IMR-90 (cell line): ENCODE measurements at regions of chr1 and their contacts with region 1.

Region 1: DNA sequence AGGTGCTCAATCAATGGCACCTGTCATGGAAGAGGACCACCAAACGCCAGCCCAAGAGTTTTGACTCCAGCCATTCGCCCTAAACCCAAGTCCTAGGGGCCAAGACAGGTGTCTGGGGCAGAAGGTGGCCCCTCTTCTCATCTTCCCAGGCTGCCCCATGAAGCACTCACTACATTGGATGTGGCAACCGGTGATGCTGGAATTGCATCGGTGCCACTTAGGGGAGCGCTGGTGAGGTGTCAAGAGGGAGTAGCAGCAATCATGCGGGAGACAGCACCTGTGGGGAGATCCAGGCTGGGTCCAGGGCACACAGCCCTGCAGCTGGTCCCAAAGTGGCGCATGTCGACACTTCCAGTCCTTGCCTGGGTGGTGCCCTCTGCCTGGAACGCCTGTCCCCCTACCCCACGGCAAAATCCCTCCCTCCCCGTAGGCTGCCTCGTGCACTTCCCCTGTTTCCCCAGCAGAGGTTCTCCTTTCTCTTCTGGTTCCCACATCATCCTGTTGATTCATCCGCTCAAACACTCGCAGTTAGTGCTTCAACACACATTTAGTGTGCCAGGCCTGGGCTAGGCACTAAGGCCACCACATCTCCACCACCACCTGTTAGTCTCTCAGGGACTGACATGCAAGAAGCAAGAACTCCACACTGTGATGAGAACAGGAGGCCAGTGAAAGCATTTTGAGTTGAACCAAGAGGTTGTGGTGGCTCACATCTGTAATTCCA is 18.5 kb downstream of the PLA2G2D start:
- DNase-seq: peak; percentile 48
- ATAC-seq: peak; percentile 95
- H3K4me3 ChIP-seq: no peak overlapping the region
- H3K27ac ChIP-seq: no peak overlapping the region
- H3K4me1 ChIP-seq: peaks cover 3% of the 10 kb centered on the region
- H3K27me3 ChIP-seq: peaks cover 22% of the 10 kb centered on the region
- CTCF ChIP-seq: peak; percentile 54
- POLR2A ChIP-seq: no peak
- RAD21 ChIP-seq: peak; percentile 59

Region 2: DNA sequence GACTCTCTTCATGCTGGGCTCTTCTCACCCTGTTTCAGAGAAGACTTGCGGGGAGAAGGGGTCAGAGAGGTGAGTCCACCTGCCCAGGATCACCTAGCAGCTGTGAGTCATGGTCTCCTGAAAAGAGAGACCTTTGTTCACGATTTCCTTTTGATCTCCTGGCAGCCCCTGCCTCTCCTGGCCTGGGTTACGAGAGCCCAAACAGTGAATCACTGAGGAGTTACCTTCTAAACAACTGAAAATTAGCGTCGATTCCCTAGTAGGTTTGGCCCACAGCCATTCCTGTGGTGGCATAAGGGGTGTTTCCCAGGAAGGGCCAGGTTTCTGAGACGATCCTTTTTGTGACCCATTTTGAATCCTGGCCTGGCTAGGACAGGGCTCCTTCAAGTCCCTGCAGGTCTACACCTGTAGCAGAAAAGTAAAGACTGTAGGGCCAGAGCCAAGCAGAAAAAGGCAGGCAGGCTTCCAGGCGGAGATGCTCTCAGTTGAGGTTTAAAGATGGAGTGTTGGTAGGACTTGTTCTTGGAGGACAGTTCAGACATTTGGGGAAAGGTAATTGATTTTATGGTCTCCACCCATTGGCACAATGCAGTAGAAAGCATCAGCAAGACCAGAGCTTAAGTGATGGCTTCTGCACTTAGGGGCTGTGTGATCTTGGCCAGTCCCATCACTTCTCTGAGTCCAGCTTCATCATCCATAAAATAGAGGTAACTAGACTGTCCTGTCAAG is 175.3 kb before region 1 on chr1:
- CTCF ChIA-PET with region 1: no interaction called
- POLR2A ChIA-PET with region 1: no interaction called
- dilution Hi-C with region 1: no loop called
- in situ Hi-C with region 1: no loop called
- intact Hi-C with region 1: loop called (anchors 2 kb)
- DNase-seq: no peak
- ATAC-seq: no peak
- H3K4me3 ChIP-seq: no peak overlapping the region
- H3K27ac ChIP-seq: no peak overlapping the region
- H3K4me1 ChIP-seq: no peaks in the 10 kb centered on the region
- H3K27me3 ChIP-seq: peaks cover 12% of the 10 kb centered on the region
- CTCF ChIP-seq: no peak
- POLR2A ChIP-seq: no peak
- RAD21 ChIP-seq: no peak

Region 3: GRCh38 chr1:20058531-20058930 is 42.3 kb before region 1 on chr1:
- CTCF ChIA-PET with region 1: no interaction called
- POLR2A ChIA-PET with region 1: no interaction called
- dilution Hi-C with region 1: no loop called
- in situ Hi-C with region 1: no loop called
- intact Hi-C with region 1: no loop called
- DNase-seq: peak; percentile 82
- ATAC-seq: peak; percentile 77
- H3K4me3 ChIP-seq: no peak overlapping the region
- H3K27ac ChIP-seq: no peak overlapping the region
- H3K4me1 ChIP-seq: no peaks in the 10 kb centered on the region
- H3K27me3 ChIP-seq: no peaks in the 10 kb centered on the region; the same call in 1 of the 2 replicates
- CTCF ChIP-seq: no peak
- POLR2A ChIP-seq: no peak
- RAD21 ChIP-seq: no peak

Region 4: DNA sequence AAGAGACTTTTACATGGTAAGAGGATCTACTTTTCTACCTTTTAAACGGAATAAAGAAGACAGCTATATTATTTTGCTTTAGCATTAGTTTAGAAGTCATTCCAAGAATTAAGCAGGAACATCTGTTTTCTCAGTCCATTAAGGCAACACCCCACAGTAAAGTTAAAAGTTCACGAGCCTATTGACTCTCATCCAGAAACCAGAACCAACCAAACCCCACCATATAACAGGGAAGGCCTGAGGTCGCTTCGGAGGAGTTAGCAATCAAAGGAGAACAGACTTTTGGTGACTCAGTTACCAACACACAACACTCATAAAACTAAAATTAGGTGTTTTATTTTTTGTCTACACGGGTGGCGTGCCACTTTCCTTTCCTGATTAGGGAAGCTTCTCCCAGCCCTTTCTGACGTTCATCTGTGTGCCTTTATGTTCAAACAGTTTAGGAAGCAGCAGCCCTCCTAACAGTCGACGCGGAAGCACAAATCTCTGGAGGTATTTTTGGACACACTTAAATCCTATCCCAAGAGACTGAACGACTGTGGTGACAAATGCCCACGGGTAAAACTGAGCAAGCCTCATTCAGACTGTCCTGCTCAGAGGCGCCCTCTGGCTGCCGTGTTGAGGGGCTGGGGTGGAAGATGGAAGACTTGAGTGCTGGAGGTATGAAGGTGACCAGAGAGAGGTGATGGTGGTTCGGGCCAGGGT is 94.1 kb after region 1 on chr1:
- CTCF ChIA-PET with region 1: no interaction called
- POLR2A ChIA-PET with region 1: no interaction called
- dilution Hi-C with region 1: no loop called
- in situ Hi-C with region 1: no loop called
- intact Hi-C with region 1: loop called (anchors 1 kb)
- DNase-seq: peak; percentile 36
- ATAC-seq: peak; percentile 75
- H3K4me3 ChIP-seq: no peak overlapping the region
- H3K27ac ChIP-seq: no peak overlapping the region
- H3K4me1 ChIP-seq: no peaks in the 10 kb centered on the region
- H3K27me3 ChIP-seq: peaks cover 35% of the 10 kb centered on the region
- CTCF ChIP-seq: peak; percentile 59
- POLR2A ChIP-seq: no peak
- RAD21 ChIP-seq: peak; percentile 48